CD4-positive, alpha-beta memory T cell (primary cell): ENCODE measurements at regions of chr9 and their contacts with region 1.

Region 1: DNA sequence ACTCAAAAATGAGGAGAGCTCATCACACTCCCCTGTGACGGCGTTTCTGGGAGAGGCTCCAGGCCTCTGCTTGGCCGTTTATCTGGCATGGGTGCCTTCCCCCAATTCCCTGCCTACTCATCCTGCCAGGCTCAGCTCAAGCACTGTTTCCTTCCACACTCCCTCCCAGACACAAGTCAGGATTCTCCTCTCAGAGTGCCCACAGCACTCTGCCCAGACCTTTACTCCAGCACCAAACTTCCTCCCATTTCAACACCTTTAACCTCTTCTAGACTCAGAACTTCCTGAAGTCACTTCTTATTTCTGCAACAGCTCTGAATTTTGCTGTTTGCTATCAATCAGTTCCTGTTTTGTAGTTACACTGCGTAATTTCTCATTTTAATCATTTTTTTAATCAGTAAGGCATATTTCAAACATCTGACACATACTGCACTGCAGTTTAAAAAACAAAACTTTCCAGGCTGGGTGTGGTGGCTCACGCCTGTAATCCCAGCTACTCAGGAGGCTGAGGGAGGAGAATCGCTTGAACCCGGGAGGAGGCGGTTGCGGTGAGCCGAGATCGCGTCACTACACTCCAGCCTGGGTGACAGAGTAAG is 16.0 kb downstream of the TRMO start:
- DNase-seq: peak; percentile 63 to 89 (median 70)
- H3K4me3 ChIP-seq: peak overlapping the region in 1 of 2 donors; percentile 45
- H3K4me3 Mint-ChIP-seq: peak overlapping the region; percentile 80 to 94 (median 86)
- H3K27ac ChIP-seq: peak overlapping the region; percentile 73
- H3K27ac Mint-ChIP-seq: peak overlapping the region; percentile 93 to 99 (median 98)
- H3K4me1 ChIP-seq: peaks cover 100% of the 10 kb centered on the region
- H3K4me1 Mint-ChIP-seq: peaks cover 57 to 94% (median 76%) of the 10 kb centered on the region in 4 donors
- H3K27me3 ChIP-seq: no peaks in the 10 kb centered on the region
- H3K27me3 Mint-ChIP-seq: no peaks in the 10 kb centered on the region

Region 2: DNA sequence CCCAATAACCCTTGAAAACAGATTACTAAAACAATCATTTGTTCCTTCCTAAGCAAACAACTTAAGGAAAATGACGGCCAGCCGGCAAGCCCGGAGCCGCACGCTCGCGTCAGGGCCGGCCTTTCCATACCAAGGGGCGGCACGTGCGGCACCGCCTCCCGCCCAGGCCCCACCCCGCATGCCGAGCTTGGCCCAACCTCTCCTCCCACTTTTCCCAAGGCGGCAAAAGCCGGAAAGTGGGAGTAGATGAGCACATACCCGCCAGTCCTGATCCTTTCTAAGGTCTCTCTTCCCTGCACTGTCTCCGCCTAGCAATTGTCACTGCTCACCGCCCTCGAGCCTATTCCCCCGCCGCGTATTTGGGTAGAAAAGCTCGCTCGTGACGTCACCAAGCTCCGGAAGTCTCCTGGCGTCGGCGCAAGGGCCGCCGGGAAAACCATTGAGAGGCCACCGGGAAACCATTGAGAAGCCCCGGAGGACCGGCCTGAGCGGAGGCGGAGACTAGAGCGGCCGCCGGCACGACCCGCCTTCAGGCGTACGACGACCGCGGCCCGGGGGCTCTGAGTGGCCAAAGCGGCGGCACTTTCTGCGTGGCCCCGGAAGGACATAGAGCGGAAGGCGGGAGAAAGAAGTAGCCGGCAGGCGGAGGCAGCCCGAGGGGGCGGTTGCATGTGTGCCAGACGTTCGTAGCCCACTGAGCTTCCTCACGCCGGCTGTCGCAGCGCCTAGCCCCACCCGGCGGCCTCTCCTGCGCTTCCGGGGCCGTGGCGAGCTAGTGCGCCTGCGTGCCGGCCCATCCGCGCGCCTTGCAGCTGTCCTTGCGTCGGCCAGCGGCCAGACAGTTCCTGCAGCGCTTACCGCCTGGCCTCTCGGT is 273.1 kb before region 1 on chr9 and contains the starts of genes NCBP1 and TSTD2:
- CTCF ChIA-PET with region 1: interaction called, 4 read pairs
- POLR2A ChIA-PET with region 1: interaction called, 7 read pairs
- intact Hi-C with region 1: loop called (anchors 5 kb)
- DNase-seq: peak; percentile 96 to 97 (median 97)
- H3K4me3 ChIP-seq: peak within 1 kb of the TSS; percentile 80 to 87
- H3K4me3 Mint-ChIP-seq: peak within 1 kb of the TSS; percentile 96 to 100 (median 98)
- H3K27ac ChIP-seq: peak within 1 kb of the TSS; percentile 92
- H3K27ac Mint-ChIP-seq: peak within 1 kb of the TSS; percentile 96 to 100 (median 100)
- H3K4me1 ChIP-seq: peaks cover 52% of the 10 kb centered on the region
- H3K4me1 Mint-ChIP-seq: peaks cover 37 to 65% (median 51%) of the 10 kb centered on the region in 4 donors
- H3K27me3 ChIP-seq: no peaks in the 10 kb centered on the region
- H3K27me3 Mint-ChIP-seq: no peaks in the 10 kb centered on the region
- total RNA-seq, gene NCBP1: 40.7 to 50.8 TPM
- total RNA-seq, gene TSTD2: 17.8 to 18.4 TPM

Region 3: GRCh38 chr9:97696803-97697601 is 209.3 kb before region 1 on chr9 and contains the start of gene XPA:
- CTCF ChIA-PET with region 1: interaction called, 13 read pairs
- POLR2A ChIA-PET with region 1: interaction called, 16 read pairs
- intact Hi-C with region 1: loop called (anchors 5 kb)
- DNase-seq: peak; percentile 96 to 97 (median 96)
- H3K4me3 ChIP-seq: peak within 1 kb of the TSS; percentile 4 to 82
- H3K4me3 Mint-ChIP-seq: peak within 1 kb of the TSS; percentile 86 to 96 (median 92)
- H3K27ac ChIP-seq: peak within 1 kb of the TSS; percentile 68
- H3K27ac Mint-ChIP-seq: peak within 1 kb of the TSS; percentile 86 to 98 (median 96)
- H3K4me1 ChIP-seq: peaks cover 44% of the 10 kb centered on the region
- H3K4me1 Mint-ChIP-seq: peaks cover 41 to 56% (median 49%) of the 10 kb centered on the region in 4 donors
- H3K27me3 ChIP-seq: no peaks in the 10 kb centered on the region
- H3K27me3 Mint-ChIP-seq: no peaks in the 10 kb centered on the region
- total RNA-seq, gene XPA: 24.0 to 25.5 TPM

Region 4: DNA sequence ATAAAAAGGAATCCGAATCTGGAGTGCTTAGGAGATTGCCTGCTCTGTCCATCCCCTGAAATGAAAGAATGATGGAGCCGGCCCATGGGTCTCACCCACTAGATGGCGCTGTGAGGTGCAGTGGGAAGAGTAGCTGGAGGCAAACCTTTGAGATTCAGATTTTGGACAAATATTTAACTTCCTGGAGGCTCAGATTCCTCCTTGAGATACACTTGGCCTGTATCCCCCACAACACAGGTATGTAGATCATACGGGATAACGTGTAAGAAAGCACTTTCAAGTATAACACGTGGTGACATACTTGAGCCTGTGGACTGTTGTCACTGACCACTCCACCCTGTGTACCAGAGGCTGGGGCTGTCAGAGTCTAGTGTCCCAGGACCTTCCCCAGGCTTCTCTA is 16.3 kb before region 1 on chr9:
- CTCF ChIA-PET with region 1: interaction called, 312 read pairs
- POLR2A ChIA-PET with region 1: interaction called, 54 read pairs
- intact Hi-C with region 1: loop called (anchors 1 kb)
- DNase-seq: peak; percentile 52 to 61 (median 56)
- H3K4me3 ChIP-seq: no peak overlapping the region
- H3K4me3 Mint-ChIP-seq: no peak overlapping the region
- H3K27ac ChIP-seq: no peak overlapping the region
- H3K27ac Mint-ChIP-seq: peak overlapping the region in 3 of 7 donors; percentile 32 to 63 (median 58)
- H3K4me1 ChIP-seq: peaks cover 9% of the 10 kb centered on the region
- H3K4me1 Mint-ChIP-seq: peaks cover 2 to 13% (median 5%) of the 10 kb centered on the region in 4 donors
- H3K27me3 ChIP-seq: no peaks in the 10 kb centered on the region
- H3K27me3 Mint-ChIP-seq: no peaks in the 10 kb centered on the region

Region 5: DNA sequence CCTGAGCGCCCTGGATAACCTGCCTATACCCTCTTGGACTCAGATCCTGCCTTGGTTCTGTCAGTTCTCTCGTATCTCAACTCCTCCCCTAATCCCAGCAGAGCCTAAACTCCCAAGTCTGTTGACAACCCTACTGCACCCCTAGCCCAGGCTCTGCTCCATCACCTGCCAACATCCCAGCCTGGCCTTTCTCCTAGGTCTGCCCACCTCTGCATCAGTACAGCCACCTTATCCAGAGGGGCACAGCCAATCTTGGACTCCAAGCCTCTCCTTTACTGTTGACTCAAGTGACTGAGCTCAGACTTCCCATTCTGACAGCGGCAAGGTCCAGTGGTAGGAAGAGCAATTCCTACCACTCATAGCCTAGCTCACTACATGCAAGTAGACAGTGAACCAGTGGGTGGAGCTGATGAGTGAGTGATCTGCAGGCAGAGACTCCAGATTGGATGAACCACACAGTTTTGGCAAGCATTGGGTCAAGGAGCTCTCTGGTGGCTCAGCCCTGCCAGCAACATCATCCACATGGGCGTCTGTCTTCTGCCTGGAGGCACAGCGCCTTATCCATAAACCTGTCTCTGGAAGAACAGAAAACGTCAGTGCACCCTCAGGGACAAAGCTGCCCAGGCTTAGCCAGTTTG is 10.5 kb before region 1 on chr9:
- CTCF ChIA-PET with region 1: interaction called, 312 read pairs
- POLR2A ChIA-PET with region 1: interaction called, 54 read pairs
- intact Hi-C with region 1: no loop called
- DNase-seq: no peak
- H3K4me3 ChIP-seq: no peak overlapping the region
- H3K4me3 Mint-ChIP-seq: no peak overlapping the region
- H3K27ac ChIP-seq: no peak overlapping the region
- H3K27ac Mint-ChIP-seq: peak overlapping the region in 4 of 7 donors; percentile 6 to 77 (median 24)
- H3K4me1 ChIP-seq: peaks cover 8% of the 10 kb centered on the region
- H3K4me1 Mint-ChIP-seq: peaks cover 5 to 23% (median 8%) of the 10 kb centered on the region in 4 donors
- H3K27me3 ChIP-seq: no peaks in the 10 kb centered on the region
- H3K27me3 Mint-ChIP-seq: no peaks in the 10 kb centered on the region

Region 6: DNA sequence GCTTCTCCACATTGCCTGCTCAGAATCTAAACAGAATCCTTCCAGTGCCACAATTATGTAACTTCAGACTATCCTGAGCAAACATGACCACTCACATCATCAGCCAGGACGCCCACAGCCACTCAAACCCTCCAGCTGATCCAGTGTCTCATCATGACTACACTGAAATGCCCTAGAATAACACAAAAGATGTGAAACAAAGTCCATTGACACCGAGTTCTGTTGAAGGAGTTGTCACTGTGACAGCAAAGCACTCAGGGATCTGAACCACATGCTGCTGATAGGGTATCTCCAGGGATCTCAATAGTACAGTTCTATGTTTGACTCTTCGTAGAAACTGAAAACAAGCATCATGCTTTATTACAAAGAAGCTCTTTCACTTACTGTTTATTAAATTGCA is 652.2 kb after region 1 on chr9:
- CTCF ChIA-PET with region 1: no interaction called
- POLR2A ChIA-PET with region 1: no interaction called
- intact Hi-C with region 1: no loop called
- DNase-seq: no peak
- H3K4me3 ChIP-seq: no peak overlapping the region
- H3K4me3 Mint-ChIP-seq: no peak overlapping the region
- H3K27ac ChIP-seq: no peak overlapping the region
- H3K27ac Mint-ChIP-seq: no peak overlapping the region
- H3K4me1 ChIP-seq: no peaks in the 10 kb centered on the region
- H3K4me1 Mint-ChIP-seq: no peaks in the 10 kb centered on the region
- H3K27me3 ChIP-seq: no peaks in the 10 kb centered on the region
- H3K27me3 Mint-ChIP-seq: peaks cover 4 to 8% of the 10 kb centered on the region in 2 donors